ENCODE measurements at regions of chr20 and their contacts with region 1.

Region 1: GRCh38 chr20:34834459-34834893 is 9.0 kb upstream of the NCOA6 start:
- DNase-seq: peak; percentile 21
- ATAC-seq: peak; percentile 81
- H3K4me3 ChIP-seq: peak overlapping the region; percentile 8 to 48; a peak in 3 of 4 replicates
- H3K27ac ChIP-seq: no peak overlapping the region
- H3K4me1 ChIP-seq: peaks cover 0 to 6% of the 10 kb centered on the region in 2 experiments; a peak in 1 of 4 replicates
- H3K27me3 ChIP-seq: peaks cover 14% of the 10 kb centered on the region; the same call in 1 of the 2 replicates
- CTCF ChIP-seq: peak; percentile 8 to 55 (median 55); a peak in 3 of 6 replicates
- POLR2A ChIP-seq: no peak
- RAD21 ChIP-seq: peak; percentile 78

Region 2: DNA sequence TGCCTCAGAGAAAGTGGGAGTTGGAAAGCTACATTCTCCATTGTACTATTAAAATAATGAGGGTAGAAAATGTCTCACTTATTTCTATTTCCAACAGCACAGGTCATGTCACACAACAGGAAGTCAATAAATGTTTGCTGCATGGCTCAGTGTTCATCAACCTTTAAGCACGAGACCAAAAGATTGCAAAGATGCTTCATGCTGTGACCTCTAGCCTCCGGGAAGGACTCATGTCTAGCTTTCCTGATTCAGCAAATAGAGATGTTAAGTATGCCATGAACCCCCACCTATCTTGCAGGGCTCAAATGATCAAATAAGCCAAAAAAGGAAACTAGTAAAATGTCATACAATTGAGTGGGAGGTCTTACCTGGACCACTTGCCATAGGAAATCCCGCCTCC is 66.4 kb before region 1 on chr20:
- CTCF ChIA-PET with region 1: no interaction called
- POLR2A ChIA-PET with region 1: no interaction called
- RAD21 ChIA-PET with region 1: no interaction called
- intact Hi-C with region 1: no loop called
- DNase-seq: no peak
- ATAC-seq: no peak
- H3K4me3 ChIP-seq: no peak overlapping the region
- H3K27ac ChIP-seq: no peak overlapping the region
- H3K4me1 ChIP-seq: no peaks in the 10 kb centered on the region
- H3K27me3 ChIP-seq: no peaks in the 10 kb centered on the region
- CTCF ChIP-seq: no peak
- POLR2A ChIP-seq: no peak
- RAD21 ChIP-seq: no peak

Region 3: GRCh38 chr20:34955232-34956040 is 121.0 kb after region 1 on chr20 and contains the starts of genes GSS and MYH7B:
- CTCF ChIA-PET with region 1: interaction called, 4 read pairs
- POLR2A ChIA-PET with region 1: no interaction called
- RAD21 ChIA-PET with region 1: no interaction called
- intact Hi-C with region 1: loop called (anchors 1 kb)
- DNase-seq: peak; percentile 91
- ATAC-seq: peak; percentile 94
- H3K4me3 ChIP-seq: peak within 1 kb of the TSS; percentile 88 to 91
- H3K27ac ChIP-seq: peak within 1 kb of the TSS; percentile 75
- H3K4me1 ChIP-seq: peaks cover 7 to 19% of the 10 kb centered on the region in 2 experiments
- H3K27me3 ChIP-seq: no peaks in the 10 kb centered on the region
- CTCF ChIP-seq: peak; percentile 37 to 78 (median 49); a peak in 5 of 6 replicates
- POLR2A ChIP-seq: peak; percentile 88
- RAD21 ChIP-seq: peak; percentile 89
- total RNA-seq, gene GSS: 83.6 TPM
- total RNA-seq, gene MYH7B: 0.74 TPM

Region 4: GRCh38 chr20:35207950-35208611 is 373.6 kb after region 1 on chr20:
- CTCF ChIA-PET with region 1: no interaction called
- POLR2A ChIA-PET with region 1: no interaction called
- RAD21 ChIA-PET with region 1: interaction called in 1 of 2 experiments, 3 read pairs
- intact Hi-C with region 1: loop called (anchors 2 kb)
- DNase-seq: peak; percentile 64
- ATAC-seq: peak; percentile 98
- H3K4me3 ChIP-seq: no peak overlapping the region
- H3K27ac ChIP-seq: peak overlapping the region; percentile 8; the same call in 1 of the 2 replicates
- H3K4me1 ChIP-seq: peaks cover 0 to 9% of the 10 kb centered on the region in 2 experiments; a peak in 2 of 4 replicates
- H3K27me3 ChIP-seq: no peaks in the 10 kb centered on the region
- CTCF ChIP-seq: peak; percentile 74 to 92 (median 84)
- POLR2A ChIP-seq: no peak
- RAD21 ChIP-seq: peak; percentile 98

Region 5: DNA sequence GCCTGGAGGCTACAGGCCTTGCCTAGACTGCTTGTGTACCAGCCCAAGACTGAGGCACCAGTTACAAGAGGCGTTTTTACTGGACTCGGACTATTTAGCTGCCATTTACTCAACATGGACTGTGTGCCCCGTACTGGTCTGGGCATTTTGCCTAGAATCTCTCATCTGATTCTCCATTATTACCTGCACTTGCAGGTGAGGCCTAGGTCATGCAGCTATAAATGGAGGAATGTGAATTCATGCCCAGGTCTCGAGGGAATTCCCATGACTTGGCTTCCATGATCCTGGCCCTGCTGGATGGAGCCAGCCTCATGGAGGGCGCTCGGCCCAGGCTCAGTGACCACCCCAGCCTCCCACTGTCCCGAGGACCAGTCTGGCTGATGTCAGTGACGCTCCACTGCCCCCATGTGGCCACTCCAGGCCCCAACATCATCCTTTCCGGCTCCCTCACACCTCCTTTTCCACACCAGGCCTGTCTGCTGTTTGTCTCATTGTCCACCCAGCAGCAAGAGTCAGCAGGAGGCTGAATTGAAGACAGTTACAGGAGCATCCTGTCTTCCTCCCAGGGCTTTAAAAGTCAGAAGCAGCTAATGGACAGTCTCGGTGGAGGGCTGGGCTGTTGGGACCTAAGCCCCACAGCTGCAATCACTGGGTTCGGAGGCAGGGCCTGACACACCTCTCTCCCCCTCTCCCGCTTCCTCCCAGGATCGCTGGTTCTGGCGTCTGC is 434.7 kb after region 1 on chr20:
- CTCF ChIA-PET with region 1: interaction called, 3 read pairs
- POLR2A ChIA-PET with region 1: no interaction called
- RAD21 ChIA-PET with region 1: no interaction called
- intact Hi-C with region 1: loop called (anchors 2 kb)
- DNase-seq: no peak
- ATAC-seq: peak; percentile 89
- H3K4me3 ChIP-seq: no peak overlapping the region
- H3K27ac ChIP-seq: no peak overlapping the region
- H3K4me1 ChIP-seq: peaks cover 9 to 17% of the 10 kb centered on the region in 2 experiments
- H3K27me3 ChIP-seq: no peaks in the 10 kb centered on the region
- CTCF ChIP-seq: peak; percentile 60 to 89 (median 88); a peak in 5 of 6 replicates
- POLR2A ChIP-seq: no peak
- RAD21 ChIP-seq: peak; percentile 84